Gastrocnemius medialis (tissue), 4 donors: ENCODE measurements at regions of chr9 and their contacts with region 1.

Region 1: GRCh38 chr9:94875300-94876020 is 149.0 kb downstream of the AOPEP start:
- DNase-seq: no peak
- ATAC-seq: no peak
- H3K4me3 ChIP-seq: no peak overlapping the region
- H3K27ac ChIP-seq: no peak overlapping the region
- H3K4me1 ChIP-seq: peaks cover 34 to 41% of the 10 kb centered on the region in 2 donors
- H3K27me3 ChIP-seq: no peaks in the 10 kb centered on the region
- CTCF ChIP-seq: no peak
- POLR2A ChIP-seq: no peak

Region 2: GRCh38 chr9:94912700-94913249 is 37.3 kb after region 1 on chr9:
- in situ Hi-C with region 1: no loop called
- intact Hi-C with region 1: loop called (anchors 5 kb)
- DNase-seq: no peak
- ATAC-seq: no peak
- H3K4me3 ChIP-seq: no peak overlapping the region
- H3K27ac ChIP-seq: peak overlapping the region in 1 of 4 donors; percentile 28
- H3K4me1 ChIP-seq: peaks cover 20 to 31% of the 10 kb centered on the region in 2 donors
- H3K27me3 ChIP-seq: no peaks in the 10 kb centered on the region
- CTCF ChIP-seq: no peak
- POLR2A ChIP-seq: no peak